PC-3 (cell line): ENCODE measurements at regions of chr2 and their contacts with region 1.

Region 1: DNA sequence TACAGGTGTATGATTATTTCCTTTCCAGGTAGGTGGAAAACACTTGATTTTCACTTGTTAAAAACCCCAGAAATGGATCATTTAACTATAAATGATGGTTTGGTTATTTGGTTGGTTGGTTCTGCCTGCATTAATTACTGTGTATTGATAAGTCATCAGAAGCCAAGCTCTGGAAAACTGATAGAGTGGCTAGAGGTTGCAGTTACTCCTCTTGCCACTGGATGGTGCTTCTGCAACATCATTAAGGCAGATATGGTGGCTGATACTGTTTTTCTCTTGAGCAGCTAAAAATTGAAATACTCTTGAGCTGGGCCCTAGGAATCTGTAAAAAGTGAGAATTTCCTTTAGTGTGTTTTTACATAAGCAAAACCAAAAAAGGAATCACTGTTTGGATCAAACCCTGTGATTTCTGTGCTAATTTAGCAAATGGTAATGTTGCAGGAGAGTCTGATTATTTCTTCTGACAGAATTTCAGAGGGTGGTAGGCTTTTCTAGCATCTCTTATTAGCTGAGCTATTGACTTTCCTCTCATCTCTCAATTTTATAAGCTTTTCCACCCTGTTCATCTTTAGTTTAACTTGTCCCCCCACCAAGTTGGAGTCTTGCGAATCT is 54.3 kb downstream of the RAB10 start:
- DNase-seq: peak; percentile 56
- ATAC-seq: no peak
- H3K4me3 ChIP-seq: no peak overlapping the region
- H3K27ac ChIP-seq: no peak overlapping the region
- H3K4me1 ChIP-seq: peaks cover 21% of the 10 kb centered on the region
- H3K27me3 ChIP-seq: no peaks in the 10 kb centered on the region
- CTCF ChIP-seq: peak; percentile 89

Region 2: DNA sequence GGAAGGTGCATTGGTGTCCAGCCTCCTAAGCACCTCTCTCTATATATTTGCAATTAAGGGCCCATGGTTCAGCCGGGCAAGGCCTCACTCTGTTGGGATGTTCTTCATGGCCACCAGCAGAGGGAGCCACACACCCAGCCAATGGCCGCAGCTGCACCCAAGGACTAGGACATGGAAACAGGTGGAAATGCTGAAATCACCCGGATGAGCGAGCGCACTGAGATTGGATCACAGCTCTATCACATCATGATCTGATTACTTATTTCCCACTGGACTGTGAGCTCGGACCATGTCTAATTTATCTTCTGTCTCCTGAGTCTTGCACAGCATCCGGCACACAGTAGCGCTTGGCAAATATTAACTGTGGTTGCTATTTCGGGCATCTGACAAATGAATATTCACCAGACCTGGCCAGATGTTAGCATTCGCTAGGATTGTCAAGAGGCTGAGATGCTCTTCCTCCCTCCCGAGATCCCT is 137.0 kb before region 1 on chr2:
- CTCF ChIA-PET with region 1: interaction called, 4 read pairs
- POLR2A ChIA-PET with region 1: interaction called, 4 read pairs
- intact Hi-C with region 1: loop called (anchors 1 kb)
- DNase-seq: peak; percentile 86
- ATAC-seq: peak; percentile 95
- H3K4me3 ChIP-seq: no peak overlapping the region
- H3K27ac ChIP-seq: no peak overlapping the region
- H3K4me1 ChIP-seq: peaks cover 13% of the 10 kb centered on the region
- H3K27me3 ChIP-seq: no peaks in the 10 kb centered on the region
- CTCF ChIP-seq: peak; percentile 95

Region 3: GRCh38 chr2:26033818-26034636 is 54.1 kb before region 1 on chr2 and contains the start of gene RAB10:
- CTCF ChIA-PET with region 1: no interaction called
- POLR2A ChIA-PET with region 1: interaction called, 3 read pairs
- intact Hi-C with region 1: loop called (anchors 2 kb)
- DNase-seq: peak; percentile 99
- ATAC-seq: peak; percentile 85
- H3K4me3 ChIP-seq: peak within 1 kb of the TSS; percentile 85
- H3K27ac ChIP-seq: peak within 1 kb of the TSS; percentile 95
- H3K4me1 ChIP-seq: peaks cover 10% of the 10 kb centered on the region
- H3K27me3 ChIP-seq: no peaks in the 10 kb centered on the region
- CTCF ChIP-seq: no peak
- total RNA-seq, gene RAB10: 138 and 149 TPM in 2 replicates

Region 4: GRCh38 chr2:26144953-26145680 is 57.0 kb after region 1 on chr2:
- CTCF ChIA-PET with region 1: interaction called, 5 read pairs
- POLR2A ChIA-PET with region 1: no interaction called
- intact Hi-C with region 1: loop called (anchors 2 kb)
- DNase-seq: peak; percentile 80
- ATAC-seq: peak; percentile 39
- H3K4me3 ChIP-seq: no peak overlapping the region
- H3K27ac ChIP-seq: no peak overlapping the region
- H3K4me1 ChIP-seq: peaks cover 18% of the 10 kb centered on the region
- H3K27me3 ChIP-seq: no peaks in the 10 kb centered on the region
- CTCF ChIP-seq: peak; percentile 92